Naive thymus-derived CD4-positive, alpha-beta T cell (primary cell): ENCODE measurements at regions of chr19 and their contacts with region 1.

Region 1: DNA sequence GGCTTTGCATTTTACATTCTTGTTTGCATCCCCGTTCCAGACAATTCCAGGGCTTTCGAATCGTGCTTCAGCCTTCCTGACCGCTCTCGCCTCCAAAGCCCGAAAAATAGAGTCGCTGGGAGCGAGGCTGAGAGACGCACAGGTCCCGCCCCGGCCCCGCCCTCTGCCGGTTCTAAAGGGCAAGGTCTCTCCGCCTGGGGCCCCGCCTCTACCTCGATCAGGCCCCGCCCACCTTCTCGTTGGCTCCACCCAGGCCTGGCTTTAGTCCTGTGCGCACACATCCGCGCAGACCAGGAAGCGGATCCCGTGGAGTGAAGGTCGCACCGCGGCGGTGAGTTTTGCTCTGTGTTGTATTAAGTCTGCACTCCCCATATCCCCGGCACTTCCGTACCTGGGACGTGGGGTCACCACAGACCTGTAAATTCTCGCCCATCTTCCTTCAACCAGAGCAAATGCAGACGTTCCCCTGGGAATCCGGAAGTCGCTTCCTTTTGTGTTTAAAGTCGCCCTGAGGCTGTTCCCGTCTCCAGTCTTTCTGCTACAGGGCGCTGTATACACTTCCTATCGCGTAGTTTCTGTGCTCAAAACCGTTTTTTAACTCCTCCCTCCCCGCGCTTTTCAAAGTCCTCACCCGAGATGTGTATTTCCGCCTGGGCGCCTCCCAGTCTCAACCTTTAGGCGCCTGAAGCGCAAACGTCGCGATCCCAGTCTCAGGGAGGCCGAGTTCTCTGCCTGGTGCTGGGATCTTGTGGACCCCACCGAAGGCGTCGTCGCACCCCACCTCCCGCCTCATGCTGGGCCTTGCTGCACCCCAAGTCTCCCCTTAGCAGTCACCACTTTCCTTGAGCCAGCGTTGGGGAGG is at the start of gene ZNF701:
- DNase-seq: peak; percentile 92 to 99 (median 96)
- ATAC-seq: peak; percentile 100
- H3K4me3 ChIP-seq: peak within 1 kb of the TSS; percentile 78
- H3K4me3 Mint-ChIP-seq: peak within 1 kb of the TSS; percentile 88 to 99 (median 94)
- H3K27ac ChIP-seq: peak within 1 kb of the TSS; percentile 78
- H3K27ac Mint-ChIP-seq: peak within 1 kb of the TSS; percentile 92 to 98 (median 95)
- H3K4me1 ChIP-seq: peaks cover 10 to 13% of the 10 kb centered on the region in 2 donors
- H3K4me1 Mint-ChIP-seq: peaks cover 9 to 42% (median 37%) of the 10 kb centered on the region in 7 donors
- H3K27me3 ChIP-seq: no peaks in the 10 kb centered on the region
- H3K27me3 Mint-ChIP-seq: no peaks in the 10 kb centered on the region
- total RNA-seq, gene ZNF701: 11.7 to 43.3 (median 28.3) TPM

Region 2: GRCh38 chr19:52453324-52454094 is 116.7 kb before region 1 on chr19 and contains the start of gene ZNF578:
- CTCF ChIA-PET with region 1: no interaction called
- POLR2A ChIA-PET with region 1: no interaction called
- intact Hi-C with region 1: loop called in 1 of 2 experiments (anchors 1 kb)
- DNase-seq: peak; percentile 18 to 78 (median 59)
- ATAC-seq: peak; percentile 81
- H3K4me3 ChIP-seq: peak within 1 kb of the TSS; percentile 56
- H3K4me3 Mint-ChIP-seq: peak within 1 kb of the TSS; percentile 72 to 93 (median 89)
- H3K27ac ChIP-seq: no peak within 1 kb of the TSS
- H3K27ac Mint-ChIP-seq: peak within 1 kb of the TSS in 8 of 9 donors; percentile 47 to 83 (median 66)
- H3K4me1 ChIP-seq: peaks cover 0 to 7% of the 10 kb centered on the region in 2 donors
- H3K4me1 Mint-ChIP-seq: peaks cover 3 to 35% (median 21%) of the 10 kb centered on the region in 7 donors
- H3K27me3 ChIP-seq: no peaks in the 10 kb centered on the region
- H3K27me3 Mint-ChIP-seq: peaks cover 0 to 21% (median 16%) of the 10 kb centered on the region in 5 donors
- total RNA-seq, gene ZNF578: 0.75 to 3.9 (median 1.5) TPM

Region 3: GRCh38 chr19:52535771-52536447 is 34.3 kb before region 1 on chr19:
- CTCF ChIA-PET with region 1: no interaction called
- POLR2A ChIA-PET with region 1: interaction called, 7 read pairs
- intact Hi-C with region 1: loop called (anchors 1 kb)
- DNase-seq: peak; percentile 60 to 87 (median 82)
- ATAC-seq: peak; percentile 99
- H3K4me3 ChIP-seq: peak overlapping the region; percentile 84
- H3K4me3 Mint-ChIP-seq: peak overlapping the region; percentile 83 to 99 (median 90)
- H3K27ac ChIP-seq: peak overlapping the region; percentile 87
- H3K27ac Mint-ChIP-seq: peak overlapping the region; percentile 69 to 95 (median 87)
- H3K4me1 ChIP-seq: no peaks in the 10 kb centered on the region
- H3K4me1 Mint-ChIP-seq: peaks cover 16 to 44% (median 34%) of the 10 kb centered on the region in 7 donors
- H3K27me3 ChIP-seq: no peaks in the 10 kb centered on the region
- H3K27me3 Mint-ChIP-seq: no peaks in the 10 kb centered on the region

Region 4: DNA sequence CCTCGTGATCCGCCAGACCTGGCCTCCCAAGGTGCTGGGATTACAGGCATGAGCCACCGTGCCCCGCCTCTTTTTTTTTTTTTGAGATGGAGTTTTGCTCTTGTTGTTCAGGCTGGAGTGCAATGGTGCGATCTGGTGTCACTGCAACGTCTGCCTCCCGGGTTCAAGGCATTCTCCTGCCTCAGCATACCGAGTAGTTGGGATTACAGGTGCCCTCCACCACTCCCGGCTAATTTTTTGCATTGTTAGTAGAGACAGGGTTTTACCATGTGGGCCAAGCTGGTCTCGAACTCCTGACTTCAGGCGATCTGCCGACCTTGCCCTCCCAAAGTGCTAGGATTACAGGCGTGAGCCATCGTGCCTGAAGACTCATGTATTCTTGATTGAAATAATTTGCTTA is 13.0 kb before region 1 on chr19:
- CTCF ChIA-PET with region 1: no interaction called
- POLR2A ChIA-PET with region 1: no interaction called
- intact Hi-C with region 1: no loop called
- DNase-seq: no peak
- ATAC-seq: no peak
- H3K4me3 ChIP-seq: peak overlapping the region; percentile 25
- H3K4me3 Mint-ChIP-seq: no peak overlapping the region
- H3K27ac ChIP-seq: no peak overlapping the region
- H3K27ac Mint-ChIP-seq: no peak overlapping the region
- H3K4me1 ChIP-seq: no peaks in the 10 kb centered on the region
- H3K4me1 Mint-ChIP-seq: no peaks in the 10 kb centered on the region
- H3K27me3 ChIP-seq: no peaks in the 10 kb centered on the region
- H3K27me3 Mint-ChIP-seq: no peaks in the 10 kb centered on the region

Region 5: DNA sequence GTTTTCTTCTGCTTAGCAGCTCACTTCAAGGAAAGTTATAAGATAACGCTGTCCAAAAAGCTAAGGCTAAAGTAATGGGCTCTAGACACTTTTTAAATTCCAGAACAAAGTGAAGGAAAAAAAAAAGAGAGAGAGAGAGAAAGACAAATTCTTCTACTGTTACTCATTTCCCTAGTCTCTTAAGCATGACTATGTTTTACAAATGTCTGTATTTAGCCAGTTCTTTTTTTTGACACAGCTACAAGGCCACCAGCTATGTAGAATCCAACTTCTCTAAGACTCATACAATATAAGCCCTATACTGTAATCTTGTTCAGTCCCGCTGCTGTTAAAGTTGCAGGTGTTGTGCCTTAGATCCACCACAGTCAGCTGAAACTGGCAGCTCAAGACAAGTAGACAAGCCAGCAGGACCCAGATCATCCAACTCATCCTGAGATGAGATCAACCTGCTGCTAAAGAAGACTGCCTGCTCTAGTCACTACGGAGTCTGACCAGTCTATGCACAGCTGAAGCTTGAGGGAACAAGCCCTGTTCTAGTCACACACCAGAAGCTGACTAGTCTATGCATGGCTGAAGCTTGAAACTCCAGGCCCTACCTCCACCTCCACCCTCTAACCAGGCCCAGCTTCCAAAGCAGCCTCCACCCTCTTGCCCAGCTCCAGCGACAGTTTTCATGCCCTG is 78.2 kb after region 1 on chr19:
- CTCF ChIA-PET with region 1: no interaction called
- POLR2A ChIA-PET with region 1: no interaction called
- intact Hi-C with region 1: no loop called
- DNase-seq: no peak
- ATAC-seq: no peak
- H3K4me3 ChIP-seq: no peak overlapping the region
- H3K4me3 Mint-ChIP-seq: no peak overlapping the region
- H3K27ac ChIP-seq: no peak overlapping the region
- H3K27ac Mint-ChIP-seq: no peak overlapping the region
- H3K4me1 ChIP-seq: no peaks in the 10 kb centered on the region
- H3K4me1 Mint-ChIP-seq: no peaks in the 10 kb centered on the region
- H3K27me3 ChIP-seq: no peaks in the 10 kb centered on the region
- H3K27me3 Mint-ChIP-seq: no peaks in the 10 kb centered on the region

Region 6: GRCh38 chr19:52690369-52691214 is 120.4 kb after region 1 on chr19:
- CTCF ChIA-PET with region 1: no interaction called
- POLR2A ChIA-PET with region 1: no interaction called
- intact Hi-C with region 1: loop called in 1 of 2 experiments (anchors 1 kb)
- DNase-seq: peak; percentile 81 to 91 (median 87)
- ATAC-seq: peak; percentile 99
- H3K4me3 ChIP-seq: peak overlapping the region; percentile 80
- H3K4me3 Mint-ChIP-seq: peak overlapping the region; percentile 92 to 99 (median 96)
- H3K27ac ChIP-seq: peak overlapping the region; percentile 85
- H3K27ac Mint-ChIP-seq: peak overlapping the region; percentile 89 to 97 (median 94)
- H3K4me1 ChIP-seq: peaks cover 6 to 9% of the 10 kb centered on the region in 2 donors
- H3K4me1 Mint-ChIP-seq: peaks cover 18 to 33% (median 30%) of the 10 kb centered on the region in 7 donors
- H3K27me3 ChIP-seq: no peaks in the 10 kb centered on the region
- H3K27me3 Mint-ChIP-seq: no peaks in the 10 kb centered on the region